ENCODE measurements at regions of chr12 and their contacts with region 1.

Region 1: GRCh38 chr12:108826101-108826806 is 31.1 kb downstream of the SSH1 start:
- DNase-seq: peak; percentile 68 to 84 (median 81)
- ATAC-seq: peak; percentile 60 to 66
- H3K4me3 ChIP-seq: no peak overlapping the region
- H3K27ac ChIP-seq: peak overlapping the region; percentile 99
- H3K4me1 ChIP-seq: peaks cover 30% of the 10 kb centered on the region
- H3K27me3 ChIP-seq: no peaks in the 10 kb centered on the region

Region 2: DNA sequence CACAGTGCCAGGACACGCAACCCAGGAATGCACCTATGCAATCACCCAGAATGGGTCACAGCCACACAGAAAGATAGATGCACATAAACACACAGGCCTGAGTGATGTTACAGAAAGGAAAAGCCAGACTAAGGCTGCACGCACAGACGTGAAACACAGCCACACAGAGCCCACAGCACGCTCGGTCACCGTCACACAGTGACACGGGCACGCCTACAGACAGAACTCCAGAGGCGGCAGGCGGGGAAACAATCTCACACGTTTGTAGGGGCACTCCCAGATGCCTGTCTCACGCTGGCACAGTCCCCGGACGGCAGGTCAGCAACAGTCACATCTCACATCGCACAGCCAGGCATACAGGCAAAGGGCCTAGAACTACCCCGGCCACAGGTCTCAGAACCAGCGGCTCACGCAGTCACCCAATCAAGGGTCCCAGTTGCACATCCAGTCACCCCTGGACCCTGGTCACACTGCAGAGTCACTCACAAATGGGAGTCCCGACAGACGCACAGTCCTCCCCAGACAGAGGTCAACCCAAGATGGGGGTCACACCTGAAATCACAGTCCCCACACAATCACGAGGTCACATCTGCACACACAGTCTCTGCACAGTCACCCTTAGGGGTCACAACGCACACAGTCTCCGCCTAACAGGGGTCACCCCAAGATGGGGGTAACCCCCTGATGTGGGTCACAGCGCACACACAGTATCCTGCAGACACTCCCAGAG is 30.3 kb after region 1 on chr12:
- intact Hi-C with region 1: loop called in 1 of 4 experiments (anchors 5 kb)
- DNase-seq: peak; percentile 83 to 92 (median 92)
- ATAC-seq: peak; percentile 51 to 59
- H3K4me3 ChIP-seq: peak overlapping the region; percentile 90
- H3K27ac ChIP-seq: peak overlapping the region; percentile 87
- H3K4me1 ChIP-seq: peaks cover 24% of the 10 kb centered on the region
- H3K27me3 ChIP-seq: no peaks in the 10 kb centered on the region

Region 3: GRCh38 chr12:109093022-109093918 is 267.0 kb after region 1 on chr12 and contains the start of gene ALKBH2:
- intact Hi-C with region 1: loop called in 1 of 4 experiments (anchors 10 kb)
- DNase-seq: peak; percentile 95 to 98 (median 97)
- ATAC-seq: peak; percentile 78 to 82
- H3K4me3 ChIP-seq: peak within 1 kb of the TSS; percentile 66
- H3K27ac ChIP-seq: peak within 1 kb of the TSS; percentile 16
- H3K4me1 ChIP-seq: peaks cover 3% of the 10 kb centered on the region
- H3K27me3 ChIP-seq: no peaks in the 10 kb centered on the region
- total RNA-seq, gene ALKBH2: 7.4 to 12.2 (median 7.6) TPM

Region 4: GRCh38 chr12:109247831-109248654 is 421.8 kb after region 1 on chr12:
- intact Hi-C with region 1: no loop called
- DNase-seq: no peak
- ATAC-seq: no peak
- H3K4me3 ChIP-seq: no peak overlapping the region
- H3K27ac ChIP-seq: no peak overlapping the region
- H3K4me1 ChIP-seq: no peaks in the 10 kb centered on the region
- H3K27me3 ChIP-seq: no peaks in the 10 kb centered on the region

Measured in right cardiac atrium (tissue), 5 donors.